ENCODE measurements at regions of chr2 and their contacts with region 1.

Region 1: GRCh38 chr2:17224807-17225206 is 293.4 kb downstream of the RAD51AP2 start:
- DNase-seq: no peak
- H3K4me3 ChIP-seq: no peak overlapping the region
- H3K27ac ChIP-seq: no peak overlapping the region
- H3K4me1 ChIP-seq: no peaks in the 10 kb centered on the region
- CTCF ChIP-seq: no peak

Region 2: DNA sequence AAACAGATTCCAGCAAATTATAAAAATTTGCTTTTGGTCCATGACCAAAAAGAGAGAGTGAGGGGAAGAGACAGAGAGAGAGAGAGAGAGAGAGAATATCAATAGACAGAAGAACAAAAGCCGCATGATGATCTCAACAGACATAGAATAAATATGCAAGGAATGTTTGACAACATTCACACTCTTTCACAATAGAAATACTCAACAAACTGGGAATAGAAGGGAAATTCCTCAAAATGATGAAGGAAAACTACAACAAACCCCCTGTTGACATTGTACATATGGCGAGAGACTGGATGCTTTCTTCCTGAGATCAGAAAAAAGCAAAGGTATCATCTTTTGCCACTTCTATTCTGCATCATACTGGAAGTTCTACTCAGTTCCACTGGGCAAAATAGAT is 16.3 kb before region 1 on chr2:
- CTCF ChIA-PET with region 1: no interaction called
- POLR2A ChIA-PET with region 1: no interaction called
- intact Hi-C with region 1: no loop called
- DNase-seq: no peak
- H3K4me3 ChIP-seq: no peak overlapping the region
- H3K27ac ChIP-seq: no peak overlapping the region
- H3K4me1 ChIP-seq: peaks cover 4% of the 10 kb centered on the region
- CTCF ChIP-seq: no peak

Region 3: DNA sequence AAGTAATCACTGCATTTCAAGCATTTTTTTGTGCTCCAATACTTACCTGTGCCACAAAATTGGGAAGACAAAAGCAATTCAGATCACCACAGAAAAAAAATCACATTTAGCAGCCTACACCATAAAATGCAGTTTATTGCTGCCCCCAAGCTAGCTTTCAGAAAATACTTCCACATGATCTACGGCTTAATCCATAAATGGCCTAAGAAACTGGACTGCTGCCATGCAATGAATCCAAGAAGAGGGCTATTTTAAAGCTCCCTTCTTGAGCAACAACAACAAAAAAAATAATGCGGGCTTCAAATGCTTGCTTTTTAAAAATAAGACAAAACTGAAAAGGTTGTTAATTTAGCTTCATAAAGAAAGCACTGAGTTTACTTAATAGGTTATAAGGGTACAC is 21.1 kb after region 1 on chr2:
- CTCF ChIA-PET with region 1: no interaction called
- POLR2A ChIA-PET with region 1: interaction called, 3 read pairs
- intact Hi-C with region 1: loop called (anchors 2 kb)
- DNase-seq: no peak
- H3K4me3 ChIP-seq: no peak overlapping the region
- H3K27ac ChIP-seq: no peak overlapping the region
- H3K4me1 ChIP-seq: no peaks in the 10 kb centered on the region
- CTCF ChIP-seq: no peak